ENCODE measurements at regions of chr21 and their contacts with region 1.

Region 1: GRCh38 chr21:24903994-24904635 is 703.2 kb downstream of the MRPL39 start:
- DNase-seq: no peak
- ATAC-seq: no peak

Region 2: GRCh38 chr21:25149022-25149421 is 244.9 kb after region 1 on chr21:
- intact Hi-C with region 1: no loop called
- DNase-seq: no peak
- ATAC-seq: no peak

Region 3: DNA sequence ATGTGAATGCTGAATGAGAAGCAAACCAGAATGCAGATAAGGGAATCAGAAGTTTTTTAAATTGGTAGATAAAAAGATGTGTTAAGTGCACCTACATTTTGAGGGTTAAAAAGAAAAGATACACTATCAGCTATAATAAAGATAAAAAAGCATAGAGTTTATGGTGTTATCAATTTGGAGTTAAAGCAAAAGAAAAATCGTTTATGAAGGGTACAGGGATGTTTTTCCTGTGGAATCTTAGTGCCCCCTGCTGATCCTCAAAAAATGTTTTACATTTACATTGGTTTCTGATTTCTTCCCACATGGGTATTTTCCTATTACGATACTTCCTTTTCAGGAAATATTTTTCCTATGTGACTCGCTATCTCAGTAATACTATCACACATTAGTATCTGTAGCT is 409.7 kb after region 1 on chr21:
- intact Hi-C with region 1: loop called (anchors 5 kb)
- DNase-seq: no peak
- ATAC-seq: no peak